Naive thymus-derived CD4-positive, alpha-beta T cell (primary cell): ENCODE measurements at regions of chr3 and their contacts with region 1.

Region 1: GRCh38 chr3:13346481-13347389 is 73.4 kb downstream of the NUP210 start:
- DNase-seq: peak; percentile 29 to 89 (median 86)
- ATAC-seq: peak; percentile 87
- H3K4me3 ChIP-seq: peak overlapping the region; percentile 33
- H3K4me3 Mint-ChIP-seq: peak overlapping the region; percentile 37 to 84 (median 71)
- H3K27ac ChIP-seq: peak overlapping the region; percentile 68
- H3K27ac Mint-ChIP-seq: peak overlapping the region; percentile 76 to 96 (median 91)
- H3K4me1 ChIP-seq: peaks cover 19 to 44% of the 10 kb centered on the region in 2 donors
- H3K4me1 Mint-ChIP-seq: peaks cover 42 to 64% (median 57%) of the 10 kb centered on the region in 7 donors
- H3K27me3 ChIP-seq: no peaks in the 10 kb centered on the region
- H3K27me3 Mint-ChIP-seq: no peaks in the 10 kb centered on the region

Region 2: GRCh38 chr3:12556671-12557472 is 789.9 kb before region 1 on chr3 and contains the start of gene MKRN2:
- CTCF ChIA-PET with region 1: no interaction called
- POLR2A ChIA-PET with region 1: no interaction called
- intact Hi-C with region 1: loop called in 1 of 2 experiments (anchors 10 kb)
- DNase-seq: peak; percentile 74 to 89 (median 83)
- ATAC-seq: peak; percentile 98
- H3K4me3 ChIP-seq: peak within 1 kb of the TSS; percentile 95
- H3K4me3 Mint-ChIP-seq: peak within 1 kb of the TSS; percentile 90 to 100 (median 96)
- H3K27ac ChIP-seq: peak within 1 kb of the TSS; percentile 94
- H3K27ac Mint-ChIP-seq: peak within 1 kb of the TSS; percentile 87 to 95 (median 93)
- H3K4me1 ChIP-seq: peaks cover 31 to 38% of the 10 kb centered on the region in 2 donors
- H3K4me1 Mint-ChIP-seq: peaks cover 40 to 71% (median 68%) of the 10 kb centered on the region in 7 donors
- H3K27me3 ChIP-seq: peaks cover 6% of the 10 kb centered on the region in 2 donors
- H3K27me3 Mint-ChIP-seq: peaks cover 22 to 37% (median 28%) of the 10 kb centered on the region in 5 donors
- total RNA-seq, gene MKRN2: 21.9 to 34.5 (median 25.4) TPM

Region 3: GRCh38 chr3:13391308-13391707 is 44.6 kb after region 1 on chr3:
- CTCF ChIA-PET with region 1: interaction called, 4 read pairs
- POLR2A ChIA-PET with region 1: no interaction called
- intact Hi-C with region 1: loop called in 1 of 2 experiments (anchors 2 kb)
- DNase-seq: peak in 3 of 9 donors; percentile 14 to 19 (median 15)
- ATAC-seq: peak; percentile 31
- H3K4me3 ChIP-seq: no peak overlapping the region
- H3K4me3 Mint-ChIP-seq: no peak overlapping the region
- H3K27ac ChIP-seq: no peak overlapping the region
- H3K27ac Mint-ChIP-seq: peak overlapping the region in 6 of 9 donors; percentile 25 to 81 (median 68)
- H3K4me1 ChIP-seq: peaks cover 0 to 6% of the 10 kb centered on the region in 2 donors
- H3K4me1 Mint-ChIP-seq: peaks cover 12 to 50% (median 35%) of the 10 kb centered on the region in 7 donors
- H3K27me3 ChIP-seq: no peaks in the 10 kb centered on the region
- H3K27me3 Mint-ChIP-seq: no peaks in the 10 kb centered on the region

Region 4: GRCh38 chr3:13419505-13420044 is 72.8 kb after region 1 on chr3:
- CTCF ChIA-PET with region 1: interaction called, 14 read pairs
- POLR2A ChIA-PET with region 1: interaction called, 125 read pairs
- intact Hi-C with region 1: loop called (anchors 1 to 2 kb)
- DNase-seq: peak; percentile 58 to 69 (median 64)
- ATAC-seq: peak; percentile 74
- H3K4me3 ChIP-seq: peak overlapping the region; percentile 70
- H3K4me3 Mint-ChIP-seq: peak overlapping the region; percentile 77 to 100 (median 90)
- H3K27ac ChIP-seq: peak overlapping the region; percentile 96
- H3K27ac Mint-ChIP-seq: peak overlapping the region; percentile 83 to 97 (median 92)
- H3K4me1 ChIP-seq: peaks cover 55 to 60% of the 10 kb centered on the region in 2 donors
- H3K4me1 Mint-ChIP-seq: peaks cover 41 to 81% (median 69%) of the 10 kb centered on the region in 7 donors
- H3K27me3 ChIP-seq: no peaks in the 10 kb centered on the region
- H3K27me3 Mint-ChIP-seq: no peaks in the 10 kb centered on the region

Region 5: GRCh38 chr3:13479581-13480339 is 133.0 kb after region 1 on chr3 and contains the start of gene HDAC11:
- CTCF ChIA-PET with region 1: interaction called, 9 read pairs
- POLR2A ChIA-PET with region 1: interaction called, 12 read pairs
- intact Hi-C with region 1: loop called in 1 of 2 experiments (anchors 1 kb)
- DNase-seq: peak; percentile 93 to 98 (median 95)
- ATAC-seq: peak; percentile 98
- H3K4me3 ChIP-seq: peak within 1 kb of the TSS; percentile 97
- H3K4me3 Mint-ChIP-seq: peak within 1 kb of the TSS; percentile 90 to 97 (median 94)
- H3K27ac ChIP-seq: peak within 1 kb of the TSS; percentile 98
- H3K27ac Mint-ChIP-seq: peak within 1 kb of the TSS; percentile 82 to 97 (median 94)
- H3K4me1 ChIP-seq: peaks cover 8 to 15% of the 10 kb centered on the region in 2 donors
- H3K4me1 Mint-ChIP-seq: peaks cover 4 to 22% (median 15%) of the 10 kb centered on the region in 7 donors
- H3K27me3 ChIP-seq: no peaks in the 10 kb centered on the region
- H3K27me3 Mint-ChIP-seq: peaks cover 0 to 13% (median 0%) of the 10 kb centered on the region in 5 donors
- total RNA-seq, gene HDAC11: 1.2 to 8.0 (median 7.3) TPM

Region 6: GRCh38 chr3:13884851-13885703 is 538.3 kb after region 1 on chr3:
- CTCF ChIA-PET with region 1: no interaction called
- POLR2A ChIA-PET with region 1: no interaction called
- intact Hi-C with region 1: loop called in 1 of 2 experiments (anchors 5 kb)
- DNase-seq: peak; percentile 42 to 83 (median 74)
- ATAC-seq: peak; percentile 84
- H3K4me3 ChIP-seq: no peak overlapping the region
- H3K4me3 Mint-ChIP-seq: peak overlapping the region in 1 of 10 donors; percentile 71
- H3K27ac ChIP-seq: no peak overlapping the region
- H3K27ac Mint-ChIP-seq: peak overlapping the region in 4 of 9 donors; percentile 9 to 86 (median 40)
- H3K4me1 ChIP-seq: peaks cover 9 to 10% of the 10 kb centered on the region in 2 donors
- H3K4me1 Mint-ChIP-seq: peaks cover 2 to 23% (median 17%) of the 10 kb centered on the region in 7 donors
- H3K27me3 ChIP-seq: peaks cover 0 to 6% of the 10 kb centered on the region in 2 donors
- H3K27me3 Mint-ChIP-seq: peaks cover 0 to 42% (median 21%) of the 10 kb centered on the region in 5 donors